ENCODE measurements at regions of chr2 and their contacts with region 1.

Region 1: GRCh38 chr2:64222351-64222750 is 78.1 kb upstream of the PELI1 start:
- DNase-seq: peak; percentile 61
- H3K4me3 ChIP-seq: no peak overlapping the region
- H3K27ac ChIP-seq: no peak overlapping the region
- H3K4me1 ChIP-seq: peaks cover 11% of the 10 kb centered on the region
- H3K27me3 ChIP-seq: no peaks in the 10 kb centered on the region
- CTCF ChIP-seq: no peak

Region 2: GRCh38 chr2:64203858-64204632 is 18.3 kb before region 1 on chr2:
- CTCF ChIA-PET with region 1: no interaction called
- dilution Hi-C with region 1: no loop called
- in situ Hi-C with region 1: no loop called
- intact Hi-C with region 1: no loop called
- DNase-seq: peak; percentile 90
- H3K4me3 ChIP-seq: no peak overlapping the region
- H3K27ac ChIP-seq: peak overlapping the region; percentile 54
- H3K4me1 ChIP-seq: peaks cover 21% of the 10 kb centered on the region
- H3K27me3 ChIP-seq: no peaks in the 10 kb centered on the region
- CTCF ChIP-seq: no peak

Region 3: GRCh38 chr2:64260817-64261216 is 38.5 kb after region 1 on chr2:
- CTCF ChIA-PET with region 1: no interaction called
- dilution Hi-C with region 1: loop called (anchors 5 kb)
- in situ Hi-C with region 1: no loop called
- intact Hi-C with region 1: no loop called
- DNase-seq: no peak
- H3K4me3 ChIP-seq: no peak overlapping the region
- H3K27ac ChIP-seq: no peak overlapping the region
- H3K4me1 ChIP-seq: peaks cover 35% of the 10 kb centered on the region
- H3K27me3 ChIP-seq: no peaks in the 10 kb centered on the region
- CTCF ChIP-seq: no peak